ENCODE measurements at regions of chr20 and their contacts with region 1.

Region 1: GRCh38 chr20:58783511-58784011 is 67.1 kb downstream of the GNAS-AS1 start:
- DNase-seq: no peak
- ATAC-seq: no peak
- H3K4me3 ChIP-seq: no peak overlapping the region
- H3K27ac ChIP-seq: no peak overlapping the region
- H3K4me1 ChIP-seq: no peaks in the 10 kb centered on the region
- H3K27me3 ChIP-seq: no peaks in the 10 kb centered on the region

Region 2: DNA sequence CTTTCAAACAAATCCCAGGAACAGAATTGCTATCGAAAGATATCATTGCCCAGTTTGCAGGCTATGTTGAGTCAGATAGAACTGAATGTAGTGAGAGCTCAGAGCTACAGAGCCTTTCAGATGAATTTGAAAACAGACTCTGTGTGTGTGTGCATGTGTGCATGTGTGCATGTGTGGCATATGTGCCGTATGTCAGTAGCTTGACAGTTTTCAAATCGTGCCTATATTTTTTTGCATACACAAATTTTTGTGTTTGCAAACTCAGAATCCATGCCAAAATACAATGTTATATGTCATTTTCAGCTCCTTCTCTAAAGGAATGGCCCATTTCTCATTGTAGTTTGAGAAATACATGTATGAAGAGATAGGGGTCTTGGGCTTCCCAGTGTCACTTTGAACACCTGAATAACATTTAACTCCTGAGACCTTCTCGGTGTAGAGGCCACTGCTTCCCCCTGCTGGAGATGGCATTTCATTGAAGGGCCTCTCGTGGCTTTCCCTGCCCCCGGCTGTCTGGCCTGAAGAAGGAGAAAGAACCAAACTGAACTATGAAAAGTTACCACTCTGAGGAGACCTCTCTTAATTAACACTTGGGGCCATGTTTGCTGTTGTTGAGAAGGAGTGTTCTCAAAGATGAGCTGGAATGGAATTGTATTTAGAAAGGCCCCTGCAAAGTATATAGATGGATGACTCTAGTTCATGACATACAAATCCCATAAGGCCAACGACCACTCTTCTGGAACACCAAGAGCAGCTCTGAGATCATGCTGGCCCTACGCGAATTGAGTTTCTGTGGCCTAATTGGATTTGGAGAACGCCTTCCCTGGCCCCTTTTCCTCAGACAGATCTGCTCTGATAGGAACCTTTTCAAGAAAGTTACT is 335.8 kb before region 1 on chr20:
- intact Hi-C with region 1: no loop called
- DNase-seq: peak in 1 of 3 donors; percentile 40
- ATAC-seq: peak in 1 of 2 donors; percentile 61
- H3K4me3 ChIP-seq: no peak overlapping the region
- H3K27ac ChIP-seq: no peak overlapping the region
- H3K4me1 ChIP-seq: no peaks in the 10 kb centered on the region
- H3K27me3 ChIP-seq: no peaks in the 10 kb centered on the region

Region 3: GRCh38 chr20:58692594-58693226 is 90.9 kb before region 1 on chr20 and contains the start of gene NPEPL1:
- intact Hi-C with region 1: no loop called
- DNase-seq: peak; percentile 78 to 91 (median 91)
- ATAC-seq: peak; percentile 81 to 90
- H3K4me3 ChIP-seq: peak within 1 kb of the TSS; percentile 87
- H3K27ac ChIP-seq: peak within 1 kb of the TSS; percentile 82
- H3K4me1 ChIP-seq: peaks cover 5% of the 10 kb centered on the region
- H3K27me3 ChIP-seq: no peaks in the 10 kb centered on the region
- total RNA-seq, gene NPEPL1: 22.0 to 28.8 (median 23.0) TPM

Region 4: GRCh38 chr20:58721951-58722778 is 61.4 kb before region 1 on chr20:
- intact Hi-C with region 1: loop called in 1 of 4 experiments (anchors 10 kb)
- DNase-seq: peak in 2 of 3 donors; percentile 18 to 56
- ATAC-seq: peak in 1 of 2 donors; percentile 35
- H3K4me3 ChIP-seq: no peak overlapping the region
- H3K27ac ChIP-seq: no peak overlapping the region
- H3K4me1 ChIP-seq: no peaks in the 10 kb centered on the region
- H3K27me3 ChIP-seq: no peaks in the 10 kb centered on the region

Measured in right cardiac atrium (tissue), 5 donors.